Posterior vena cava (tissue), 2 donors: ENCODE measurements at regions of chr5 and their contacts with region 1.

Region 1: GRCh38 chr5:66324357-66324756 is 180.3 kb downstream of the SREK1 start:
- DNase-seq: no peak

Region 2: GRCh38 chr5:66273121-66273520 is 51.2 kb before region 1 on chr5:
- intact Hi-C with region 1: loop called in 1 of 2 experiments (anchors 2 kb)
- DNase-seq: no peak

Region 3: GRCh38 chr5:66302344-66302743 is 22.0 kb before region 1 on chr5:
- intact Hi-C with region 1: no loop called
- DNase-seq: no peak

Region 4: GRCh38 chr5:66415208-66415607 is 90.9 kb after region 1 on chr5:
- intact Hi-C with region 1: no loop called
- DNase-seq: no peak